Posterior vena cava (tissue), 2 donors: ENCODE measurements at regions of chr18 and their contacts with region 1.

Region 1: GRCh38 chr18:36757081-36757480 is 71.7 kb downstream of the TPGS2 start:
- DNase-seq: no peak

Region 2: DNA sequence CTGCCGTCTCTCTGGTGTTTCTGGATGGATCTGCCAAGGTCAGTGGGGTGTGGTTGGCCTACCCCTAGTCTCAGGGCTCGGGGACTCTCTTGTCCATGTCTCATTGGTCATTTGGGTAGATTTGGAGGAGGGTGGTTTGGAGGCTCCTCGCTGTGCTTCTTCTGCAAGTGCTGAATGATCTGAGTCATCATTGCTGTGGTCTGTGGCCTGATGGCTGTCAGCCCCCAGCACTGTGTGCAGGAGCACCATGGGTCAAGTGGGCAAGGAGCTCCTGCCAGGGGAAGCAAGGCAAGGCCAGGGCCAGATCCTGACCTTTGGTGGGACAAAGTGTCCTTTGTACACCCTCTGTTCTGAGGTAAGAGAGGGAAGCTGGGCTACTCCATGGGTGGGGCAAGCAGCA is 237.7 kb before region 1 on chr18:
- intact Hi-C with region 1: loop called in 1 of 2 experiments (anchors 2 kb)
- DNase-seq: no peak

Region 3: GRCh38 chr18:36693931-36694620 is 63.0 kb before region 1 on chr18:
- intact Hi-C with region 1: loop called (anchors 5 kb)
- DNase-seq: no peak

Region 4: GRCh38 chr18:36786686-36787085 is 29.6 kb after region 1 on chr18:
- intact Hi-C with region 1: no loop called
- DNase-seq: peak; percentile 83